ENCODE measurements at regions of chr1 and their contacts with region 1.

Region 1: DNA sequence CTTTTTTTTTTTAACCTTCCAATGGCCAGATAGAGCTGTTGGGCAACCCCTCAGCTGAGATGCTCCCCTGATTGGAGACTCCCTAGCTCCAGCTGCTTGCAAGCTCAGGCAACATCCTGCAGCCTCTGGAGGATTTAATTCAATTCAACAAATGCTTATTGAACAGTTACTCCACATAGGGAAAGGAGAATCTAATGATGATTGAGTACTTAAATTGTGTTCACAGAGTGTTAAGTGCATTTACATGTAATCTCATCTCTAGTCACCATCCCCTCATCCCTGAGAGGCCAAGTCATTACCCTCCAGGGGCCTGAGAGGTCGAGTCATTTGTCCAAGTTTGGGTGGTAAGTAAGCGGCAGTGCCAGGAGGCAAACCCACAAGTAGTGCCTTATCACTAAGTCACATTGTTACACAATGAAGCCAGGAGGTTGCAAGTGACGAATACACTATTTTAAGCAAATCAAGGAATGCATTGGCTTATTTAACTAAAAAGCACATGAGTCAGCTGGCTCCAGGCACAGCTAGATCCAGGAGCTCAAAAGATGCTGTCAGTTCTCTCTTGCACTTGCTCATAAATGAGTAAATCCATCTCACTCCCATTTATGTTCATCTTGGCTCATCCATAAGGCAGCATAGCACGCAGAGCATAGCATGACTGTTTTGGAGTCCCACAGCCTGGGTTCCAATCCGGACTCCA is 64.3 kb downstream of the OPTC start:
- DNase-seq: peak; percentile 10
- H3K4me3 ChIP-seq: no peak overlapping the region
- H3K27ac ChIP-seq: peak overlapping the region; percentile 84 to 90 (median 84)
- H3K4me1 ChIP-seq: peaks cover 8 to 46% (median 19%) of the 10 kb centered on the region in 4 donors
- H3K27me3 ChIP-seq: no peaks in the 10 kb centered on the region
- CTCF ChIP-seq: no peak
- EP300 ChIP-seq: peak; percentile 48
- POLR2A ChIP-seq: no peak

Region 2: GRCh38 chr1:203512830-203513611 is 45.2 kb before region 1 on chr1:
- in situ Hi-C with region 1: no loop called
- intact Hi-C with region 1: loop called (anchors 5 kb)
- DNase-seq: peak; percentile 40
- H3K4me3 ChIP-seq: no peak overlapping the region
- H3K27ac ChIP-seq: peak overlapping the region; percentile 73 to 83 (median 80)
- H3K4me1 ChIP-seq: peaks cover 10 to 32% (median 21%) of the 10 kb centered on the region in 4 donors
- H3K27me3 ChIP-seq: no peaks in the 10 kb centered on the region
- CTCF ChIP-seq: no peak
- EP300 ChIP-seq: no peak
- POLR2A ChIP-seq: no peak

Region 3: GRCh38 chr1:203638950-203639349 is 80.7 kb after region 1 on chr1:
- in situ Hi-C with region 1: no loop called
- intact Hi-C with region 1: no loop called
- DNase-seq: no peak
- H3K4me3 ChIP-seq: no peak overlapping the region
- H3K27ac ChIP-seq: peak overlapping the region; percentile 61 to 94 (median 76)
- H3K4me1 ChIP-seq: peaks cover 34 to 59% (median 39%) of the 10 kb centered on the region in 4 donors
- H3K27me3 ChIP-seq: no peaks in the 10 kb centered on the region
- CTCF ChIP-seq: no peak
- EP300 ChIP-seq: no peak
- POLR2A ChIP-seq: no peak

Region 4: GRCh38 chr1:203702130-203702577 is 143.9 kb after region 1 on chr1:
- in situ Hi-C with region 1: no loop called
- intact Hi-C with region 1: no loop called
- DNase-seq: peak; percentile 70
- H3K4me3 ChIP-seq: no peak overlapping the region
- H3K27ac ChIP-seq: peak overlapping the region; percentile 58 to 80 (median 64)
- H3K4me1 ChIP-seq: peaks cover 0 to 25% (median 5%) of the 10 kb centered on the region in 4 donors
- H3K27me3 ChIP-seq: no peaks in the 10 kb centered on the region
- CTCF ChIP-seq: peak; percentile 74 to 96 (median 82)
- EP300 ChIP-seq: no peak
- POLR2A ChIP-seq: no peak